ENCODE measurements at regions of chr1 and their contacts with region 1.

Region 1: GRCh38 chr1:10494754-10495474 is 20.2 kb downstream of the PEX14 start:
- DNase-seq: peak; percentile 66 to 83 (median 76)
- ATAC-seq: peak; percentile 88
- H3K4me3 ChIP-seq: peak overlapping the region; percentile 94
- H3K4me3 Mint-ChIP-seq: peak overlapping the region; percentile 82 to 93 (median 88)
- H3K27ac ChIP-seq: peak overlapping the region; percentile 79
- H3K27ac Mint-ChIP-seq: peak overlapping the region; percentile 91 to 97 (median 96)
- H3K4me1 ChIP-seq: peaks cover 17 to 19% of the 10 kb centered on the region in 2 donors
- H3K4me1 Mint-ChIP-seq: peaks cover 30 to 58% (median 51%) of the 10 kb centered on the region in 7 donors
- H3K27me3 ChIP-seq: no peaks in the 10 kb centered on the region
- H3K27me3 Mint-ChIP-seq: no peaks in the 10 kb centered on the region

Region 2: GRCh38 chr1:10117865-10118264 is 377.0 kb before region 1 on chr1:
- CTCF ChIA-PET with region 1: no interaction called
- POLR2A ChIA-PET with region 1: no interaction called
- intact Hi-C with region 1: no loop called
- DNase-seq: no peak
- ATAC-seq: no peak
- H3K4me3 ChIP-seq: no peak overlapping the region
- H3K4me3 Mint-ChIP-seq: no peak overlapping the region
- H3K27ac ChIP-seq: no peak overlapping the region
- H3K27ac Mint-ChIP-seq: no peak overlapping the region
- H3K4me1 ChIP-seq: no peaks in the 10 kb centered on the region
- H3K4me1 Mint-ChIP-seq: peaks cover 0 to 1% (median 0%) of the 10 kb centered on the region in 7 donors
- H3K27me3 ChIP-seq: no peaks in the 10 kb centered on the region
- H3K27me3 Mint-ChIP-seq: no peaks in the 10 kb centered on the region

Region 3: DNA sequence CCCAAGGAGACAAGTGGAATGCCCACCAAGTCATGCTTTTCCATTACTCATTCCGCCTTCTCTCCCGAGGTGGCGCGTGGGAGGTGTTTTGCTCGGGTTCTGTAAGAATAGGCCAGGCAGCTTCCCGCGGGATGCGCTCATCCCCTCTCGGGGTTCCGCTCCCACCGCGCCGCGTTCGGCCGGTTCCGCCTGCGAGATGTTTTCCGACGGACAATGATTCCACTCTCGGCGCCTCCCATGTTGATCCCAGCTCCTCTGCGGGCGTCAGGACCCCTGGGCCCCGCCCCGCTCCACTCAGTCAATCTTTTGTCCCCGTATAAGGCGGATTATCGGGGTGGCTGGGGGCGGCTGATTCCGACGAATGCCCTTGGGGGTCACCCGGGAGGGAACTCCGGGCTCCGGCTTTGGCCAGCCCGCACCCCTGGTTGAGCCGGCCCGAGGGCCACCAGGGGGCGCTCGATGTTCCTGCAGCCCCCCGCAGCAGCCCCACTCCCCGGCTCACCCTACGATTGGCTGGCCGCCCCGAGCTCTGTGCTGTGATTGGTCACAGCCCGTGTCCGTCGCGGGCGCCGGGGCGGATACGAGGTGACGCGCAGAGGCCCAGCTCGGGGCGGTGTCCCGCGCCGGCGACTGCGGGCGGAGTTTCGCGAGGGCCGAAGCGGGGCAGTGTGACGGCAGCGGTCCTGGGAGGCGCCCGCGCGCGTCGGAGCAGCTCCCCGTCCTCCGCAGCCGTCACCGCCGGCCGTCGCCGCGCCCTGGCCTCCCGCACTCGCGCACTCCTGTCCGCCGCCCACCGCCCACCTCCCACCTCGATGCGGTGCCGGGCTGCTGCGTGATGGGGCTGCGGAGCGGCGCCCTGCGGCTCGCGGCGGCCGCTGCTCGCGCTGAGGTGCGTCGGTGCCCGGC is 284.8 kb before region 1 on chr1 and contains the start of gene KIF1B:
- CTCF ChIA-PET with region 1: interaction called, 3 read pairs
- POLR2A ChIA-PET with region 1: no interaction called
- intact Hi-C with region 1: loop called (anchors 1 to 10 kb)
- DNase-seq: peak; percentile 93 to 98 (median 95)
- ATAC-seq: peak; percentile 99
- H3K4me3 ChIP-seq: peak within 1 kb of the TSS; percentile 94
- H3K4me3 Mint-ChIP-seq: peak within 1 kb of the TSS; percentile 83 to 93 (median 90)
- H3K27ac ChIP-seq: peak within 1 kb of the TSS; percentile 75
- H3K27ac Mint-ChIP-seq: peak within 1 kb of the TSS; percentile 51 to 82 (median 67)
- H3K4me1 ChIP-seq: peaks cover 5 to 15% of the 10 kb centered on the region in 2 donors
- H3K4me1 Mint-ChIP-seq: peaks cover 14 to 37% (median 21%) of the 10 kb centered on the region in 7 donors
- H3K27me3 ChIP-seq: peaks cover 0 to 4% of the 10 kb centered on the region in 2 donors
- H3K27me3 Mint-ChIP-seq: peaks cover 0 to 8% (median 0%) of the 10 kb centered on the region in 5 donors
- total RNA-seq, gene KIF1B: 10.4 to 21.6 (median 13.4) TPM

Region 4: GRCh38 chr1:10430216-10431069 is 64.5 kb before region 1 on chr1 and contains the start of gene CENPS:
- CTCF ChIA-PET with region 1: interaction called, 41 read pairs
- POLR2A ChIA-PET with region 1: interaction called, 8 read pairs
- intact Hi-C with region 1: loop called (anchors 1 kb)
- DNase-seq: peak; percentile 68 to 96 (median 91)
- ATAC-seq: peak; percentile 93
- H3K4me3 ChIP-seq: peak within 1 kb of the TSS; percentile 97
- H3K4me3 Mint-ChIP-seq: peak within 1 kb of the TSS; percentile 82 to 98 (median 88)
- H3K27ac ChIP-seq: peak within 1 kb of the TSS; percentile 88
- H3K27ac Mint-ChIP-seq: peak within 1 kb of the TSS; percentile 66 to 96 (median 92)
- H3K4me1 ChIP-seq: peaks cover 3 to 8% of the 10 kb centered on the region in 2 donors
- H3K4me1 Mint-ChIP-seq: peaks cover 0 to 26% (median 20%) of the 10 kb centered on the region in 7 donors
- H3K27me3 ChIP-seq: no peaks in the 10 kb centered on the region
- H3K27me3 Mint-ChIP-seq: peaks cover 0 to 2% (median 0%) of the 10 kb centered on the region in 5 donors
- total RNA-seq, gene CENPS: 5.4 to 13.0 (median 9.8) TPM

Region 5: DNA sequence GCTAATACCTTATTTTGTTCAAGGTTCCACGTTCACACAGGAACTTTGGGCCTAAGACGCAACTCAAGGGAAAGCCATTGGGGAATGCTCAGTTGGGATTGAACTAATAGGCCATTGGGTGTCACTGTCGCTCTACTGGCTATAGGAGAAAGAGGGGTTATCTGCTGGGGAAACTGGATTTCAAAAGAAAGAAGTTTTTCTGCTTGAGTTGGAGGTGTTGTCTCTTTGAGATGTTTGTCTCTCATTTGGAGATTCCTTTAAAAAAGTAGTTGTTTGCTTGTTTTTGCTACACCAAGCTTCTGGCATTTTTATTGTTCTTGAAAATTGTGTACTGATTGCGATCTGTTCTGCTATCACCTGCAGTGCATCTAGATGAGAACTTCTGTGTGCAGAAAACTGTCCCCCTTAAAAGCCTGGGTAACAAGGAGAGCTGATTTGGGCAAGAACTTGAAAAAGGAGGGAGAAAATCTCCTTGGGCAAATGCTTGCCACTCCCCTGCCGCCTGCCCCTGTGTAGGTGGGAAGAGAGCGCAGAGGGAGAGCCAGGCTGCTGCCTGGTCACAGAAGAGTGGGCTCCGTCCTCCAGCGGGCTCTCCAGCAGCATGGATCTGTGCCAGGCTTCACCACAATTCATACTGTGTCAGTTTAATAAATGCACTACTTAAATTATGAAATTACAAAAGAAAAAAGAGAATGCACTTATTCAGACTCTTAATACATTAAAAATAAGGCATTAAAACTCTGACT is 19.7 kb after region 1 on chr1:
- CTCF ChIA-PET with region 1: interaction called, 12 read pairs
- POLR2A ChIA-PET with region 1: interaction called, 20 read pairs
- intact Hi-C with region 1: loop called (anchors 1 kb)
- DNase-seq: no peak
- ATAC-seq: no peak
- H3K4me3 ChIP-seq: no peak overlapping the region
- H3K4me3 Mint-ChIP-seq: peak overlapping the region in 8 of 10 donors; percentile 5 to 57 (median 24)
- H3K27ac ChIP-seq: no peak overlapping the region
- H3K27ac Mint-ChIP-seq: peak overlapping the region in 6 of 9 donors; percentile 50 to 79 (median 67)
- H3K4me1 ChIP-seq: peaks cover 62 to 78% of the 10 kb centered on the region in 2 donors
- H3K4me1 Mint-ChIP-seq: peaks cover 64 to 93% (median 86%) of the 10 kb centered on the region in 7 donors
- H3K27me3 ChIP-seq: no peaks in the 10 kb centered on the region
- H3K27me3 Mint-ChIP-seq: no peaks in the 10 kb centered on the region

Region 6: DNA sequence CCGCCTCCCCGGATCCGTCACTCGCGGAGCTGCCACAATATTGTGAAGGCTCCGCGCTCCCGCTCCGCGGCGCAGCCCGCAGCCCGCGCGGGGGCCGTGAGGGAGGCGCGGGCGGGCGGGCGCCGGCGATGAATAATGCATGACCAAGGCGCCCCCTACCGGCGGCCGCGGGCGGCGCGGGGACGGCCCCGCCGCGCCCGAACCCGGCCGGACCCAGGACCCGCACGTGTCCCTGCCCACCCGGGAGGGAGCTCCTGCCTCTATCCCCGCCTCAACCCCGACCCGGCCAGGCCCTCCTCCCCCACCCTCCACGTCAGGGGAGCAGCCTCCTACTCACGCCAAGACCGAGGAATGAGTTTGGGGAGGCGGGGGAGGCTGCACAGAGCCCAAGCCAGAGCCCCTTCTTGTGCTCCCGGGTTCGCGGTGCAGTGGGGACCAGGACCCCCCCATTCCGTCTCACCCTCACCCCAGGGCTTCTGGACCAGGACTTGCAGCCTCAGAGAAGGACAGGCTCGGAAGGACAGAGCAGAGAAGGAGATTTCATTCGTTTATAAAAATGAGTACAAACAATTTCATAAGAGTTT is 372.3 kb after region 1 on chr1:
- CTCF ChIA-PET with region 1: interaction called, 15 read pairs
- POLR2A ChIA-PET with region 1: interaction called, 3 read pairs
- intact Hi-C with region 1: loop called (anchors 1 kb)
- DNase-seq: peak; percentile 36 to 79 (median 61)
- ATAC-seq: peak; percentile 93
- H3K4me3 ChIP-seq: peak overlapping the region; percentile 33
- H3K4me3 Mint-ChIP-seq: peak overlapping the region in 8 of 10 donors; percentile 43 to 81 (median 60)
- H3K27ac ChIP-seq: no peak overlapping the region
- H3K27ac Mint-ChIP-seq: peak overlapping the region in 1 of 9 donors; percentile 32
- H3K4me1 ChIP-seq: peaks cover 0 to 7% of the 10 kb centered on the region in 2 donors
- H3K4me1 Mint-ChIP-seq: peaks cover 8 to 32% (median 15%) of the 10 kb centered on the region in 7 donors
- H3K27me3 ChIP-seq: peaks cover 0 to 15% of the 10 kb centered on the region in 2 donors
- H3K27me3 Mint-ChIP-seq: peaks cover 51 to 74% (median 56%) of the 10 kb centered on the region in 5 donors

Region 7: DNA sequence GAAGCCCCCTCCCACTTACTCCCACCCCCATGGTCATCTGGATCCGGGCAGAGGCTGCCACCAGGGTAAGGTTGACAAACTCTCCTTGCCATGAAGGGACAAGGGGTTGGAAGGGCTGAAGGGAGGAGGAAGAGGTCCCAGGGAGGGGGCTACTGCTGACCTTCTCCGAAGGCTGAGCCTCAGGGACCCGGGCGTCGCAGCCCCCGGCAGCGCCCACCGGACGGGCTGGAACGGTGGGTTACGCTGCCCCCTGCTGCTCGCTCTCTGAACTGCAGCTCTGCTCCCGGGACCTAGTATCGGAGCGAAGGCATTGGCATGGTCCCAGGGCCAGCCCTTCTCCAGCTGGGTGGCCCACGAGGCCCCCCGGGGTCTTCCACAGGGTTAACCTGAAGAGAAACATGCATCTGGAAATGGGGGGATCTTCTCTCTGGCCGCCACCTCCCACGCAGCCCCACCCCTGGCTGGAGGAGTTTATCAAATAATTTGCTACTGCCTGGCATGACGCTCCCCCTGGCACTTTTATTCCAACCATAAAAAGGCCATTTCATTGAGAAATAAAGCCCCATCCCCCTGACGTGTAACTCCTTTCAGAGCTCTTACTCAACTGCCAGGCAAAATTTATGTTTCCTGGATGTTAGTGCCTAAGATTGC is 447.1 kb after region 1 on chr1:
- CTCF ChIA-PET with region 1: interaction called, 12 read pairs
- POLR2A ChIA-PET with region 1: no interaction called
- intact Hi-C with region 1: loop called (anchors 1 to 2 kb)
- DNase-seq: peak; percentile 23 to 75 (median 53)
- ATAC-seq: peak; percentile 78
- H3K4me3 ChIP-seq: no peak overlapping the region
- H3K4me3 Mint-ChIP-seq: peak overlapping the region in 1 of 10 donors; percentile 21
- H3K27ac ChIP-seq: no peak overlapping the region
- H3K27ac Mint-ChIP-seq: no peak overlapping the region
- H3K4me1 ChIP-seq: peaks cover 11 to 29% of the 10 kb centered on the region in 2 donors
- H3K4me1 Mint-ChIP-seq: peaks cover 20 to 49% (median 32%) of the 10 kb centered on the region in 7 donors
- H3K27me3 ChIP-seq: no peaks in the 10 kb centered on the region
- H3K27me3 Mint-ChIP-seq: peaks cover 19 to 72% (median 21%) of the 10 kb centered on the region in 5 donors

Measured in naive thymus-derived CD4-positive, alpha-beta T cell (primary cell).